GM12878 (cell line): ENCODE measurements at regions of chr2 and their contacts with region 1.

Region 1: GRCh38 chr2:17753803-17754663 is at the starts of genes GEN1 and SMC6:
- DNase-seq: peak; percentile 83
- ATAC-seq: peak; percentile 80
- H3K4me3 ChIP-seq: peak within 1 kb of the TSS; percentile 91
- H3K27ac ChIP-seq: peak within 1 kb of the TSS; percentile 94
- H3K4me1 ChIP-seq: peaks cover 9% of the 10 kb centered on the region
- H3K27me3 ChIP-seq: no peaks in the 10 kb centered on the region
- CTCF ChIP-seq: no peak
- EP300 ChIP-seq: no peak
- POLR2A ChIP-seq: no peak; the same call in 1 of the 2 replicates
- RAD21 ChIP-seq: no peak
- polyA plus RNA-seq, gene GEN1: 6.0 to 9.4 TPM
- polyA plus RNA-seq, gene SMC6: 12.8 to 18.9 TPM

Region 2: GRCh38 chr2:17518212-17519154 is 235.6 kb before region 1 on chr2 and contains the start of gene RAD51AP2:
- CTCF ChIA-PET with region 1: no interaction called
- POLR2A ChIA-PET with region 1: no interaction called
- RAD21 ChIA-PET with region 1: interaction called, 3 read pairs
- SMC1A ChIA-PET with region 1: no interaction called
- in situ Hi-C with region 1: no loop called
- intact Hi-C with region 1: loop called (anchors 5 kb)
- DNase-seq: peak; percentile 40
- ATAC-seq: peak; percentile 93
- H3K4me3 ChIP-seq: peak within 1 kb of the TSS; percentile 61; the same call in 1 of the 2 replicates
- H3K27ac ChIP-seq: peak within 1 kb of the TSS; percentile 6; the same call in 1 of the 2 replicates
- H3K4me1 ChIP-seq: peaks cover 10% of the 10 kb centered on the region; the same call in 1 of the 2 replicates
- H3K27me3 ChIP-seq: no peaks in the 10 kb centered on the region
- CTCF ChIP-seq: no peak; a peak in 1 of 6 replicates
- EP300 ChIP-seq: no peak
- POLR2A ChIP-seq: peak; percentile 54; the same call in 1 of the 2 replicates
- RAD21 ChIP-seq: no peak
- polyA plus RNA-seq, gene RAD51AP2: 0.02 TPM in 1 of 2 experiments, not detected in the other

Region 3: GRCh38 chr2:17780546-17780945 is 26.5 kb after region 1 on chr2:
- CTCF ChIA-PET with region 1: interaction called, 5 read pairs
- POLR2A ChIA-PET with region 1: interaction called, 4 read pairs
- RAD21 ChIA-PET with region 1: interaction called, 3 read pairs
- SMC1A ChIA-PET with region 1: interaction called, 18 read pairs
- in situ Hi-C with region 1: no loop called
- intact Hi-C with region 1: no loop called
- DNase-seq: no peak
- ATAC-seq: no peak
- H3K4me3 ChIP-seq: no peak overlapping the region
- H3K27ac ChIP-seq: no peak overlapping the region
- H3K4me1 ChIP-seq: no peaks in the 10 kb centered on the region
- H3K27me3 ChIP-seq: no peaks in the 10 kb centered on the region
- CTCF ChIP-seq: no peak
- EP300 ChIP-seq: no peak
- POLR2A ChIP-seq: no peak
- RAD21 ChIP-seq: no peak

Region 4: DNA sequence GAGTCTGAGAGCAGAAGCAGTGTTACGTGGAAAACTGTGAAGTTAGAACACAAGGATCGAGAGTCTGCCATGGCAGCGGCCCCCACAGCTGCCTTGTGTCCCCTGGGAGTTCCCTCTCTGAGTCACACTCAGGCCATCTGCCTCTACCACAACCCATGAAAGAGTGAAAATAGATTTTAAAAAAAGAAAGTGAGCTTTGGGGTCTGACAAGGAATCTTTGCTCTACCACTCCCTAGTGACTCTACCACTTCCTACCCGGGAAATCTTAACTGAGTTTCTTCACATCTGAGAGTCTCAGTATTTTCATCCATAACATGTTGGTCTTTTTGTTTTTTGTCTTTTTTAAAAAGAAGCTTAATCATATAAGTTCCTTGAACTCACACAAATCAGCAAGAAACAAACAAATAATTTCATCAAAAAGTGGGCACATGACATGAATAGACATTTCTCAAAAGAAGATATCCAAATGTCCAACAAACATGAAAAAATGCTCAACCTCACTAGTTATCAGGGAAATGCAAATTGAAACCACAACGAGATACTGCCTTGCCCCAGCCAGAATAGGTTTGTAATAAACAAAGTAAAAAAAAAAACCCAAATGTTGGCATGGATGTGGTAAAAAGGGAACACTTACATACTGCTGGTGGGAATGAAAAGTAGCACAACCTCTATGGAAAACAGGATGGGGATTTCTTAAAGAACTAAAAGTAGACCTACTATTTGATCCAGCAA is 59.9 kb after region 1 on chr2:
- CTCF ChIA-PET with region 1: interaction called, 7 read pairs
- POLR2A ChIA-PET with region 1: interaction called, 19 read pairs
- RAD21 ChIA-PET with region 1: interaction called, 49 read pairs
- SMC1A ChIA-PET with region 1: interaction called, 19 read pairs
- in situ Hi-C with region 1: no loop called
- intact Hi-C with region 1: no loop called
- DNase-seq: peak; percentile 82
- ATAC-seq: peak; percentile 86
- H3K4me3 ChIP-seq: 0 out of 2 replicates have a peak overlapping the region, but pooled peaks have one; percentile 11
- H3K27ac ChIP-seq: peak overlapping the region; percentile 81
- H3K4me1 ChIP-seq: peaks cover 36% of the 10 kb centered on the region
- H3K27me3 ChIP-seq: no peaks in the 10 kb centered on the region
- CTCF ChIP-seq: no peak
- EP300 ChIP-seq: peak; percentile 31 to 80; a peak in 3 of 4 replicates
- POLR2A ChIP-seq: no peak
- RAD21 ChIP-seq: 0 out of 2 replicates have a peak, but pooled peaks have one; percentile 3

Region 5: DNA sequence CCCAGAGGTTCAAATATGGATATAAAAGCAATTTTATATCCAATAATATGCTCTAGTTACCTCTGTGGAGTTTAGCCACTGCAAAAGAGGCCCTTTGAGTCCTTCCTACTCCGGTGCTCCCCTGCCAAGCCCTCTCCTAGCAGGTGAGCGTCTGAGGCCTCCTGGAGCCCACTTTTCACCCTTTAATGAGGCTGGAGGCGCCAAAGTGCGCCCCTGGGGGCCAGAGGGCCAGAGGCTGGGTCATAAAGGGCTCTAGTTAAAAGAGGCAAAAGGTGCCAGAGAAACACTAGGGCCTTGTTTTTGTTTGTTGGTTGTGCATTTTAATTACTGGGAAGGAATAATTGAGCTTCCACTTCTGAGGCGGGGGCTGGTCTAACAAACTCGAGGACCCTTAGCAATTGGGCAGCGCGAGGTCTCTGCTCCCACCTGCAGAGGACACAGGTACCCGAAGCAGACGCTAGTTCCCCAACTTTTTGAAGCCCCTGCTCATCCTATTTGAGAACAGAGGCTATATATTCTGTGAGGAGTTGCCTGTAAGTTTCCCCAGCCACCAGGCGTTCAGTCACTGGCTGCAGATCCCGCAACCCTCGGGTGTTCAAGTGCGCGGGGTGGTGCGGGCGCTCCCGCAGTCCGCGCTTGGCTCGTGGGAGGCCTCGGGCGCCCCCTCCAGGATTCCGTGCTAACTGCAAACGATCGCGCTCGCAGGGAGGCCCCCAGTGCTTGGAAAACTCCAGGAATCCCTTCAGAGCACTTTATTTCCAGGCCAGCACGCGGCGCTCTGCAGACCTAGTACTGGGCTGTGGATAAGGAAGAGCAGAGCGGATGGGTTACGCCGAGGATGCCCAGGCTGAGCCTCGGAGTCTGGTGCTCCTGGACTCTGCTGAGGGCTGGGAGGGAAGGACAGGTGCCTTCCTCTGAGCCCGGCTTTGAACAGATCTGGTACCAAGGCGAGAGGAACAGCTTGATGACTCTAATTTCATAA is 76.3 kb after region 1 on chr2:
- CTCF ChIA-PET with region 1: interaction called, 79 read pairs
- POLR2A ChIA-PET with region 1: interaction called, 6 read pairs
- RAD21 ChIA-PET with region 1: interaction called, 28 read pairs
- SMC1A ChIA-PET with region 1: interaction called, 60 read pairs
- in situ Hi-C with region 1: no loop called
- intact Hi-C with region 1: loop called (anchors 2 kb)
- DNase-seq: no peak
- ATAC-seq: peak; percentile 95
- H3K4me3 ChIP-seq: peak overlapping the region; percentile 22; the same call in 1 of the 2 replicates
- H3K27ac ChIP-seq: no peak overlapping the region
- H3K4me1 ChIP-seq: peaks cover 4% of the 10 kb centered on the region; the same call in 1 of the 2 replicates
- H3K27me3 ChIP-seq: no peaks in the 10 kb centered on the region
- CTCF ChIP-seq: peak; percentile 85 to 93 (median 90)
- EP300 ChIP-seq: no peak
- POLR2A ChIP-seq: no peak
- RAD21 ChIP-seq: peak; percentile 88